Vagina (tissue), 2 donors: ENCODE measurements at regions of chr3 and their contacts with region 1.

Region 1: GRCh38 chr3:10164546-10165393 is at the start of gene IRAK2:
- DNase-seq: no peak
- H3K4me3 ChIP-seq: peak within 1 kb of the TSS; percentile 59 to 78
- H3K27ac ChIP-seq: peak within 1 kb of the TSS; percentile 50
- H3K4me1 ChIP-seq: peaks cover 9% of the 10 kb centered on the region
- H3K27me3 ChIP-seq: no peaks in the 10 kb centered on the region
- CTCF ChIP-seq: peak; percentile 45 to 91 (median 81)
- POLR2A ChIP-seq: no peak
- total RNA-seq, gene IRAK2: 10.6 TPM

Region 2: DNA sequence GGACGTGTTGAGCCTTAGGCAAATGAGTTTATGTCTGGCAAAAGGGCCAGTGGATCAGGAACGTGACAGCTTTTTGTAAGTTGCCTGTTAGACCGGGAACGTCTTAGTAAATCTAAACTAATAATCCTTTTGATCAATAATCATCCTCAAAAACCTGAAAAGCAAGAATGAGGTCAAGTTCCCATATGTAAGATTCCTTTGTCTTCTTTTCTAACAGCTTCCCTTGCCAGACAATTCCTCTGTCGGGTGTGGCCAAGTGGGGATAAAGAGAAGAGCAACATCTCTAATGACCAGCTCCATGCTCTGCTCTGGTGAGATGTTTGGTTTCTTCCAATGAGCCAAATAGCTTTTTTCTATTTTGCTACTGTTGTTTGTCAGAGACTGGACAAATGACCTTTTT is 76.5 kb before region 1 on chr3:
- intact Hi-C with region 1: no loop called
- DNase-seq: no peak
- H3K4me3 ChIP-seq: no peak overlapping the region
- H3K27ac ChIP-seq: no peak overlapping the region
- H3K4me1 ChIP-seq: no peaks in the 10 kb centered on the region
- H3K27me3 ChIP-seq: no peaks in the 10 kb centered on the region
- CTCF ChIP-seq: no peak
- POLR2A ChIP-seq: no peak

Region 3: DNA sequence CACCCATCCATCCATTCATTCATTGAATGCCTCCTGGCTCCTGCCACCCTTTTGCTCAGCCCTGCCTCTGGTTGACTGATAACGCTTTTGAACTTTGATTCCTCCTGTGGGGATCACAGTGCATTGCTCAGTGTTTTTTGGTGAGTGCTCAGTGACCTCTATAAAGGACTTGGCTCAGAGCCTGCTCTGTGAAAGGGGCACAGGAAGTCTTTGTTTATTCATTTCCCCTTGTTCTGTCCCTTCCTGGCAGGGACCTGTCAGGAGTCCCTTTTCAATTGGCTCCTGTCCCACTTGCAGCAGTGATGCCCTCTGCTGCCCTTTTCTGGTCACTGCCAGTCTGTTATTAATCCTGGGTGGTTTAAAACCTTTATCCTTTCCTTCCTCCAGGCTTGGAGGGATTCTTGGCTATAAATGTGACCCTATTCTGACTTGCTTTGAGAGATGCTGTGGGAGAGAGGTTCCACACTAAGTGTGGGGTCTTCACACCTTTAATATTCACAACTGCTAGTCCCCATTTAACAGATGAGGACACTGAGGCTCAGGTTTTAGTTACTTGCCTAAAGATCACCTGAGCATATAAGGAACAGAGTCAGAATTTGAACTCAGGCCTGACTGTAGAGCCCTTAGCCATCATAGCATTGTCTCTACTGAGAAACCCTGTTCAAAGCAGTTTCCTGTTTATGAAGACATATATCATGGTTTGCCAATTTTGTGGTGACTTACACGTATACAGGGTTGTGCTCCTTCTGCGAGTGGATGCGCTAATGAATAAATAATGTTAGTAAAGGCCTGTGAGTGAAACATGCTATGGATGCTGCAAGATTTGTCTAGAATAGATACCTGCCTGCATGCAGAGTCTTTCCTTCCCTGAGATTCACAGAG is 60.3 kb after region 1 on chr3:
- intact Hi-C with region 1: loop called (anchors 10 kb)
- DNase-seq: no peak
- H3K4me3 ChIP-seq: no peak overlapping the region
- H3K27ac ChIP-seq: no peak overlapping the region
- H3K4me1 ChIP-seq: peaks cover 6% of the 10 kb centered on the region
- H3K27me3 ChIP-seq: no peaks in the 10 kb centered on the region
- CTCF ChIP-seq: peak; percentile 63 to 80 (median 70)
- POLR2A ChIP-seq: no peak

Region 4: GRCh38 chr3:10263646-10264363 is 99.0 kb after region 1 on chr3:
- intact Hi-C with region 1: no loop called
- DNase-seq: no peak
- H3K4me3 ChIP-seq: peak overlapping the region in 1 of 2 donors; percentile 11
- H3K27ac ChIP-seq: peak overlapping the region; percentile 27
- H3K4me1 ChIP-seq: peaks cover 31% of the 10 kb centered on the region
- H3K27me3 ChIP-seq: no peaks in the 10 kb centered on the region
- CTCF ChIP-seq: peak in 2 of 3 experiments; percentile 10 to 31
- POLR2A ChIP-seq: no peak